Activated CD8-positive, alpha-beta T cell treated with anti-CD3 and anti-CD28 coated beads, Interleukin-2, amount 10 ng/mL, durations not matched to agents 7 days and 5 days (primary cell): ENCODE measurements at regions of chr22 and their contacts with region 1.

Region 1: GRCh38 chr22:36180038-36180880 is 19.7 kb upstream of the APOL3 start:
- DNase-seq: peak; percentile 90
- ATAC-seq: peak; percentile 99
- H3K4me3 Mint-ChIP-seq: no peak overlapping the region
- H3K27ac Mint-ChIP-seq: no peak overlapping the region
- H3K4me1 Mint-ChIP-seq: peaks cover 4% of the 10 kb centered on the region
- H3K27me3 Mint-ChIP-seq: no peaks in the 10 kb centered on the region

Region 2: GRCh38 chr22:36123673-36124630 is 56.3 kb before region 1 on chr22:
- CTCF ChIA-PET with region 1: interaction called, 12 read pairs
- POLR2A ChIA-PET with region 1: no interaction called
- DNase-seq: peak; percentile 95
- ATAC-seq: peak; percentile 100
- H3K4me3 Mint-ChIP-seq: peak overlapping the region; percentile 51
- H3K27ac Mint-ChIP-seq: peak overlapping the region; percentile 78
- H3K4me1 Mint-ChIP-seq: peaks cover 17% of the 10 kb centered on the region
- H3K27me3 Mint-ChIP-seq: peaks cover 9% of the 10 kb centered on the region

Region 3: GRCh38 chr22:36144886-36145541 is 35.2 kb before region 1 on chr22:
- CTCF ChIA-PET with region 1: interaction called, 118 read pairs
- POLR2A ChIA-PET with region 1: interaction called, 4 read pairs
- DNase-seq: peak; percentile 57
- ATAC-seq: peak; percentile 71
- H3K4me3 Mint-ChIP-seq: no peak overlapping the region
- H3K27ac Mint-ChIP-seq: no peak overlapping the region
- H3K4me1 Mint-ChIP-seq: peaks cover 9% of the 10 kb centered on the region
- H3K27me3 Mint-ChIP-seq: no peaks in the 10 kb centered on the region

Region 4: GRCh38 chr22:36151006-36151595 is 29.2 kb before region 1 on chr22:
- CTCF ChIA-PET with region 1: interaction called, 118 read pairs
- POLR2A ChIA-PET with region 1: interaction called, 4 read pairs
- DNase-seq: no peak
- ATAC-seq: no peak
- H3K4me3 Mint-ChIP-seq: no peak overlapping the region
- H3K27ac Mint-ChIP-seq: peak overlapping the region; percentile 63
- H3K4me1 Mint-ChIP-seq: peaks cover 52% of the 10 kb centered on the region
- H3K27me3 Mint-ChIP-seq: no peaks in the 10 kb centered on the region

Region 5: DNA sequence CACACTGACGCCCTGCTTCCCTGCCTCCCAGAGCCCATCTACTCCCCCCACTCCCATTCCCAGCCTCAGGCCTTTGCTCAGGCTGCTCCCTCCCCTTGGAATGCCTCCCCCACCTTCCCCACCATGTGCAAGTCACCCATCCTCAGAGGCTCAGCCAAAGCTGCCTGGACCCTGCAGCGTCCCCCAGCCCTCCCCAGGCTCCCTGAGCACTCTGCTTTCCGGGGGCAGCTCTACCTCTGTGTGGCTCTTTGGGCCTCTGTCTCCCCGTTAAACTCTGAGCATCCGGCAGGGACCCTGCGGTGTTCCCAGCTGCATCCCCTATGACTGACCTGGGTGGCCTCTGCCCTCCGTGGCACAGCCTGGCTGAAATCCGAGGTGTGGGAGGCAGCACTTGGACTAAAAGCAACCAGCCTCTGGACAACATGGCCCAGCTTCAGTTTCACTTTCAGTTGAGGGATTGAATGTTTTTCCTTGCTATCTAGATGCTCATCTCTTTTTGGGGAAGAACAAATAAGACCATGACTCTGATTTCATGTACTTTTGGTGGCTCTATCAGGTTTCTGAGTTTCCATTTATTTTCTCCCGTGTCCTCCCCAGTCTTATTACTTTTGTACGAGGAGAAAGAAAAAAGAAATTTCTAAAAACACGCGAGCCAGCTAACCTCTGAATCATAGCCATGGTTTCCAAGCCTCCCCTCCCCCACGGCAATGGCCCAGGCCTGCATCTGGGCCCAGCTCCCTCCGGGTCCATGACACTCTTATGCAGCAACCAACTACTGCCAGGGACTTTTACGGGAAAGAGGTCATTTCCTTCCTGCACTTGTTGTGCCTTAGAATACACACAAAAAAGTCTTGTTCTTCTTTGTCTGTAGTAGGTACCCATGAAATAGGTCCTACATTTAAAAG is 23.5 kb before region 1 on chr22:
- CTCF ChIA-PET with region 1: interaction called, 114 read pairs
- POLR2A ChIA-PET with region 1: interaction called, 4 read pairs
- DNase-seq: peak; percentile 66
- ATAC-seq: peak; percentile 49
- H3K4me3 Mint-ChIP-seq: peak overlapping the region; percentile 97
- H3K27ac Mint-ChIP-seq: peak overlapping the region; percentile 97
- H3K4me1 Mint-ChIP-seq: peaks cover 93% of the 10 kb centered on the region
- H3K27me3 Mint-ChIP-seq: no peaks in the 10 kb centered on the region

Region 6: GRCh38 chr22:36194971-36195370 is 14.7 kb after region 1 on chr22:
- CTCF ChIA-PET with region 1: interaction called, 11 read pairs
- POLR2A ChIA-PET with region 1: no interaction called
- DNase-seq: peak; percentile 72
- ATAC-seq: peak; percentile 62
- H3K4me3 Mint-ChIP-seq: no peak overlapping the region
- H3K27ac Mint-ChIP-seq: no peak overlapping the region
- H3K4me1 Mint-ChIP-seq: peaks cover 44% of the 10 kb centered on the region
- H3K27me3 Mint-ChIP-seq: no peaks in the 10 kb centered on the region

Region 7: GRCh38 chr22:36221799-36222751 is 41.8 kb after region 1 on chr22:
- CTCF ChIA-PET with region 1: interaction called, 10 read pairs
- POLR2A ChIA-PET with region 1: no interaction called
- DNase-seq: peak; percentile 73
- ATAC-seq: peak; percentile 94
- H3K4me3 Mint-ChIP-seq: no peak overlapping the region
- H3K27ac Mint-ChIP-seq: no peak overlapping the region
- H3K4me1 Mint-ChIP-seq: peaks cover 12% of the 10 kb centered on the region
- H3K27me3 Mint-ChIP-seq: peaks cover 29% of the 10 kb centered on the region